GM12878 (cell line): ENCODE measurements at regions of chr3 and their contacts with region 1.

Region 1: DNA sequence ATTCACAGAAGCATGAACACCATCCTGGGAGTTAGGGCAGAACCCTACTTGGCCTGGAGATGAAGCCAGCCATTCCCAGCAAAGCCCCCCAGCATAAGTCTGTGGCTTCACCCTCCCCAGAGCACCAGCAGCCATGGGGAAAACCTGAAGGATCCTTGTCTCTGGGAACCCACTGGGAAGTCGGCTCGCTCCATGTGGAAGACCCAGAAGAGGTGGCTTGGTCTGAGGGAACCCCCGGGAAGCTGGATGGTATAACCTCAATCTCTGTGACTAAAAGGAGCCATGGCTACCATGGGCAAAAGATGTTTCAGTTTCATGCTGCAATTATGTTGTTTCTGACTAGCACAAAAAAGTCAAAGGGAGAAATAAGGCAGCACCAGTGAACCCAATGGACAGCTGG is 11.8 kb upstream of the RPUSD3 start:
- DNase-seq: no peak
- ATAC-seq: peak; percentile 47
- H3K4me3 ChIP-seq: no peak overlapping the region
- H3K27ac ChIP-seq: no peak overlapping the region
- H3K4me1 ChIP-seq: no peaks in the 10 kb centered on the region
- H3K27me3 ChIP-seq: no peaks in the 10 kb centered on the region; a peak in 1 of 4 replicates
- CTCF ChIP-seq: no peak
- EP300 ChIP-seq: no peak
- POLR2A ChIP-seq: no peak
- RAD21 ChIP-seq: no peak

Region 2: GRCh38 chr3:9779721-9780457 is 75.7 kb before region 1 on chr3:
- CTCF ChIA-PET with region 1: no interaction called
- POLR2A ChIA-PET with region 1: no interaction called
- RAD21 ChIA-PET with region 1: no interaction called
- SMC1A ChIA-PET with region 1: no interaction called
- in situ Hi-C with region 1: no loop called
- intact Hi-C with region 1: no loop called
- DNase-seq: peak; percentile 59
- ATAC-seq: peak; percentile 82
- H3K4me3 ChIP-seq: no peak overlapping the region
- H3K27ac ChIP-seq: peak overlapping the region; percentile 50
- H3K4me1 ChIP-seq: peaks cover 31% of the 10 kb centered on the region
- H3K27me3 ChIP-seq: no peaks in the 10 kb centered on the region
- CTCF ChIP-seq: no peak
- EP300 ChIP-seq: peak in 1 of 2 experiments; percentile 45; a peak in 1 of 4 replicates
- POLR2A ChIP-seq: no peak; the same call in 1 of the 2 replicates
- RAD21 ChIP-seq: no peak

Region 3: DNA sequence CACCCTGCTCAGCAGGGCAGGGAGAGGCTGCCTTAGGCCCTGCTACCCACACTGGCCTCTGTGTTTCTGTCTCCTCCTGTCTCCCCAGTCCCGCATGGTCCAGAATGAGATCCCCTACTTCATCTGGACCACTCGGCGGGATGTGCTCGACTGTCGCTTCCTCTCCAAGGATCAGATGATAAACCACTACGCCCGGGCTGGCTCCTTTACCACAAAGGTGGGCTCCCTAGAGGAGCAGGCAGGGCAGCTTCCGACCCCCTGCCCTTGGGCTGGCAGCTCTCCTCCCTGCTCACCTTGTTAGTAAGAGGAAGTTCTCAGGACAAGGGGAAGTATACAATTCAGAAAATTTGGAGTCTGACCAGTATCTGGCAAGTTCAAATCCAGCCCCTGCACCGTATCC is 39.6 kb before region 1 on chr3:
- CTCF ChIA-PET with region 1: no interaction called
- POLR2A ChIA-PET with region 1: no interaction called
- RAD21 ChIA-PET with region 1: no interaction called
- SMC1A ChIA-PET with region 1: no interaction called
- in situ Hi-C with region 1: no loop called
- intact Hi-C with region 1: loop called (anchors 1 kb)
- DNase-seq: no peak
- ATAC-seq: no peak; the same call in 2 of the 3 replicates
- H3K4me3 ChIP-seq: no peak overlapping the region
- H3K27ac ChIP-seq: no peak overlapping the region
- H3K4me1 ChIP-seq: no peaks in the 10 kb centered on the region
- H3K27me3 ChIP-seq: no peaks in the 10 kb centered on the region
- CTCF ChIP-seq: no peak
- EP300 ChIP-seq: no peak
- POLR2A ChIP-seq: no peak
- RAD21 ChIP-seq: no peak

Region 4: GRCh38 chr3:10164546-10165393 is 309.2 kb after region 1 on chr3 and contains the start of gene IRAK2:
- CTCF ChIA-PET with region 1: no interaction called
- POLR2A ChIA-PET with region 1: no interaction called
- RAD21 ChIA-PET with region 1: no interaction called
- SMC1A ChIA-PET with region 1: no interaction called
- in situ Hi-C with region 1: no loop called
- intact Hi-C with region 1: no loop called
- DNase-seq: no peak
- ATAC-seq: peak; percentile 92
- H3K4me3 ChIP-seq: peak within 1 kb of the TSS; percentile 94
- H3K27ac ChIP-seq: no peak within 1 kb of the TSS
- H3K4me1 ChIP-seq: peaks cover 7% of the 10 kb centered on the region; the same call in 1 of the 2 replicates
- H3K27me3 ChIP-seq: no peaks in the 10 kb centered on the region
- CTCF ChIP-seq: peak; percentile 76 to 86 (median 81)
- EP300 ChIP-seq: no peak
- POLR2A ChIP-seq: peak; percentile 79
- RAD21 ChIP-seq: peak; percentile 22; the same call in 1 of the 2 replicates
- polyA plus RNA-seq, gene IRAK2: 0.48 to 0.88 TPM